PC-9 (cell line): ENCODE measurements at regions of chr1 and their contacts with region 1.

Region 1: GRCh38 chr1:17125756-17126237 is 6.5 kb upstream of the PADI2 start:
- DNase-seq: peak; percentile 64 to 86
- H3K4me3 ChIP-seq: no peak overlapping the region
- H3K27ac ChIP-seq: peak overlapping the region; percentile 37; the same call in 1 of the 2 replicates
- H3K4me1 ChIP-seq: peaks cover 39% of the 10 kb centered on the region
- H3K27me3 ChIP-seq: no peaks in the 10 kb centered on the region
- CTCF ChIP-seq: peak; percentile 85

Region 2: DNA sequence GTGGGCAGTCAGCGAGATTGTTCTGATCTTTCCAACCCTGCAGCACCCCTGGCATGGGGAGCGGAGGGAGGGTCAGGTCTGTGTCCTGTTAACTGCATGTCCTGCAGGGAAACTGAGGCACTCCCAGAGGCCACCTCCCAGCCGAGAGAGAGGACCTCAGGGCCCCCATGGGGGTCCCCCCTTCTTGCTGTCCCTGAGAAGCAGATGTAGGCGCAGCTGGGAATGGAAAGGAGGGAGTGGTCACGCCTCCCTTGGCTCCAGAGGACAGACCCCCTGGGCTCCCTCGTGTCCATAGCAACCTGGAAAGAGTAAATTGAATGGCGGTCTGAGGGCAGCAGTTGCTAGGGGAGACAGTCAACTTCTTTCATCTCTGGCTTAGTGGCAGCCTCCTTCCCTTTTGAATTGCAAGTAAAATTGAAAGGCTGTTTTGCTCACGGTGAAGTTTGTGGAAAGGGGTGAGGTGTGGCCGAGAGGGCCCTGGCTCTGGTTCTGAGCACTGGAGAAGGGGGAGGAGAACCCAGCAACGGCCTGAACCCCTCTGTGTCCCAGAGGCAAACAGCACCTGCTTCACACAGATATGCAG is 199.2 kb before region 1 on chr1:
- CTCF ChIA-PET with region 1: no interaction called
- POLR2A ChIA-PET with region 1: no interaction called
- intact Hi-C with region 1: no loop called
- DNase-seq: no peak
- H3K4me3 ChIP-seq: no peak overlapping the region
- H3K27ac ChIP-seq: no peak overlapping the region
- H3K4me1 ChIP-seq: no peaks in the 10 kb centered on the region
- H3K27me3 ChIP-seq: no peaks in the 10 kb centered on the region
- CTCF ChIP-seq: no peak

Region 3: GRCh38 chr1:17168091-17168876 is 42.5 kb after region 1 on chr1:
- CTCF ChIA-PET with region 1: no interaction called
- POLR2A ChIA-PET with region 1: no interaction called
- intact Hi-C with region 1: loop called (anchors 1 kb)
- DNase-seq: peak; percentile 60 to 86
- H3K4me3 ChIP-seq: peak overlapping the region; percentile 30; the same call in 1 of the 2 replicates
- H3K27ac ChIP-seq: peak overlapping the region; percentile 95
- H3K4me1 ChIP-seq: peaks cover 32% of the 10 kb centered on the region
- H3K27me3 ChIP-seq: no peaks in the 10 kb centered on the region
- CTCF ChIP-seq: no peak

Region 4: GRCh38 chr1:17201201-17202021 is 75.6 kb after region 1 on chr1:
- CTCF ChIA-PET with region 1: no interaction called
- POLR2A ChIA-PET with region 1: interaction called, 20 read pairs
- intact Hi-C with region 1: no loop called
- DNase-seq: peak; percentile 77 to 90
- H3K4me3 ChIP-seq: peak overlapping the region; percentile 15; the same call in 1 of the 2 replicates
- H3K27ac ChIP-seq: peak overlapping the region; percentile 90
- H3K4me1 ChIP-seq: peaks cover 57% of the 10 kb centered on the region
- H3K27me3 ChIP-seq: no peaks in the 10 kb centered on the region
- CTCF ChIP-seq: no peak

Region 5: DNA sequence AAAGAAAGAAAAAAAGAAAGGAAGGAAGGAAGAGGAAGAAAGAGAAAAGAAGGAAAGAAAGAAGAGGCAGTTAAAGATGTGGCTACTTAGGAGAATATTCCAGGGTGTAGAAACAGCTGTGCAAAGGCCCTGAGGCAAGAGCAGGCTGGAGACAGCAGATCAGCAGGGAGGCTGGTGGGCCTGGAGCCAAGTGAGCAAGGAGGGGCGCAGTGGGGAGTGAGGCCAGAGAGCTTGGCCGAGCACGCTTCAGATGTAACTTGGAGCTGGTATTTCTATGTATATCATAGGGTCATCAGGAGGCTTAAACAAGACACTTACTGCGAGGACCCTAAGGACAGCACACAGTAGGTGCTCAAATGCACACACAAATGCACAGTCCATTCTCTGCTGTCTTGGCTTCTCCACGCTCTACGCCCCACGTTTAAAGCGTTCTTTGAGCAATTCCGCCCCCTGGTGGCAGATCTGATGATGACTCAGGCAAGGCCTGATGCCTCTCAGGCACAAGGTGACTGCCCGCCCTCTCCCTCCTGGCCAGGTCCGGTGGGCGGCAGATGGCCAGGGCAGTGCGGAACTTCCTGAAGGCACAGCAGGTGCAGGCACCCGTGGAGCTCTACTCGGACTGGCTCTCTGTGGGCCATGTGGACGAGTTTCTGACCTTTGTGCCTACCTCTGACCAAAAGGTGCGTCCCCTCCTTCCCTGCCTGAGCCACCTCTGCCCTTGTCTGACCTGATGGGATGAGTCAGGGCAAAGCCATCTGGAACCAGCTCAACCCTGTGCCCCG is 111.2 kb after region 1 on chr1:
- CTCF ChIA-PET with region 1: interaction called, 9 read pairs
- POLR2A ChIA-PET with region 1: interaction called, 12 read pairs
- intact Hi-C with region 1: loop called (anchors 1 kb)
- DNase-seq: peak; percentile 83 to 94
- H3K4me3 ChIP-seq: no peak overlapping the region
- H3K27ac ChIP-seq: peak overlapping the region; percentile 53
- H3K4me1 ChIP-seq: peaks cover 52% of the 10 kb centered on the region
- H3K27me3 ChIP-seq: no peaks in the 10 kb centered on the region
- CTCF ChIP-seq: peak; percentile 87

Region 6: GRCh38 chr1:17335821-17336710 is 210.3 kb after region 1 on chr1:
- CTCF ChIA-PET with region 1: no interaction called
- POLR2A ChIA-PET with region 1: no interaction called
- intact Hi-C with region 1: loop called (anchors 1 kb)
- DNase-seq: peak; percentile 55 to 79
- H3K4me3 ChIP-seq: no peak overlapping the region
- H3K27ac ChIP-seq: no peak overlapping the region
- H3K4me1 ChIP-seq: no peaks in the 10 kb centered on the region; the same call in 1 of the 2 replicates
- H3K27me3 ChIP-seq: no peaks in the 10 kb centered on the region
- CTCF ChIP-seq: peak; percentile 86

Region 7: GRCh38 chr1:17561561-17561985 is 435.8 kb after region 1 on chr1:
- CTCF ChIA-PET with region 1: no interaction called
- POLR2A ChIA-PET with region 1: no interaction called
- intact Hi-C with region 1: no loop called
- DNase-seq: peak; percentile 58 to 86
- H3K4me3 ChIP-seq: no peak overlapping the region; the same call in 1 of the 2 replicates
- H3K27ac ChIP-seq: peak overlapping the region; percentile 95
- H3K4me1 ChIP-seq: peaks cover 53% of the 10 kb centered on the region
- H3K27me3 ChIP-seq: no peaks in the 10 kb centered on the region
- CTCF ChIP-seq: no peak